Dorsolateral prefrontal cortex (tissue), 120 donors: ENCODE measurements at regions of chr10 and their contacts with region 1.

Region 1: DNA sequence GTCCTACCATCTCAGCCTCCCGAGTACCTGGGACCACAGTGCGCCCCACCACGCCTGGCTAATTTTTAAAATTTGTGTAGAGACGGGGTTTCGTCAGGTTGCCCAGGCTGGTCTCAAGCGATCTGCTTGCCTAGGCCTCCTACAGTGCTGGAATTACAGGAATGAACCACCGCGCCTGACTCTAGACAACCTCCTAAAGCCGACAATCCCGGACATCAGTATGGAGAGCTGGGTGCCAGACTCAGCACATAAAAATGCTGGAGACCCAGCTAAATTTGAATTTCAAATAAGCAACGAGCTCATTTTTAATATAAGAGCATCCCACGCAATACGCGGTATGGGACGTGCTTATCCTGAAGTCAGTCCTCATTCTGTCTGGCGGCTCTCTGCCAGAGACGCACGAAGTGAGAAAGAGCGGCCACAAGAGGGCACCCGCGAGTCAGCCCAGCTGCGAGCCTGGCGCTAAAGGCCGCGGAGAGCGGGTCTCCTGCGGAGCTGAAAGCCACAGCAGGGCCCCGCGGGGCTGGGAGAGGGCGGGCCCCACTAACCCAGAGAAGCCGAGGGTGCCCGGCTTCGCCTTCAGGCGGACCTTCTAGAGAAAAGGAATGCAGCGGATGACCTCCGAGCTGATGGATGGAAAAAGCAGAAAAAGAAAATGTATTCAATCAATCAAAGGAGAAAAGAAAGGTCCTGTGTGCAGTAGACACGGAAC is 7.0 kb downstream of the CALY start:
- DNase-seq: peak; percentile 82 to 92 (median 86)
- H3K4me3 ChIP-seq: peak overlapping the region in 56 of 59 donors; percentile 17 to 64 (median 43)
- H3K27ac ChIP-seq: peak overlapping the region in 9 of 59 donors; percentile 5 to 68 (median 27)
- H3K27me3 ChIP-seq: peaks cover 0 to 49% (median 23%) of the 10 kb centered on the region in 45 donors
- CTCF ChIP-seq: peak; percentile 84 to 99 (median 96)

Region 2: DNA sequence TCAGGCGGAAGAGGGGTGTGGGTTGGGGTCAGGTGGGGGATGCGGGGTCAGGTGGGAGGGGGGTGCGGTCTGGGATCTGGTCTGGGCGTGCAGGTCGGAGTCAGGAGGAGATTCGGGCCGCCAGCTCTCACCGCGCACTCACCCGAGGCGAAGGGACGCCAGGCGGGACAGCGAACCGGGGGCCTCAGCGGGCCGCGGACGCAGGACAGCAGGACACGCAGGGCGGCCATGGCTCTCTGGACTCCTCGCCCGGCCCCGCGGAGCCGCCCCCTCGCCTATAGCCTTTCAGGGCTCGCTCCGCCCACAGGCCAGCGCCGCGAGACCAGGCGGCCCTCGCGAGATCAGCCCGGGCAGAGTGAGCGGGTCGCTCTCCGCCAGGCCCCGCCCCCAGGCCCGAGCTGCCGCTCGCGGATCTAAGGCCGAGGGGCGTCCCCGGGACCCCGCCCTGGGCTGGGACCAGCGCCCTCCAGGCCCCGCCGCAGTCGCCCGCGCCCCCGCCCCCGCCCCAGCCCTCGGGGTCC is 43.5 kb after region 1 on chr10 and contains the start of gene ECHS1:
- intact Hi-C with region 1: loop called (anchors 5 kb)
- DNase-seq: peak; percentile 90 to 98 (median 94)
- H3K4me3 ChIP-seq: peak within 1 kb of the TSS; percentile 54 to 90 (median 76)
- H3K27ac ChIP-seq: peak within 1 kb of the TSS; percentile 76 to 99 (median 91)
- H3K27me3 ChIP-seq: no peaks in the 10 kb centered on the region
- CTCF ChIP-seq: peak in 10 of 56 donors; percentile 7 to 30 (median 19)
- total RNA-seq, gene ECHS1: 54.4 to 99.5 (median 79.6) TPM

Region 3: DNA sequence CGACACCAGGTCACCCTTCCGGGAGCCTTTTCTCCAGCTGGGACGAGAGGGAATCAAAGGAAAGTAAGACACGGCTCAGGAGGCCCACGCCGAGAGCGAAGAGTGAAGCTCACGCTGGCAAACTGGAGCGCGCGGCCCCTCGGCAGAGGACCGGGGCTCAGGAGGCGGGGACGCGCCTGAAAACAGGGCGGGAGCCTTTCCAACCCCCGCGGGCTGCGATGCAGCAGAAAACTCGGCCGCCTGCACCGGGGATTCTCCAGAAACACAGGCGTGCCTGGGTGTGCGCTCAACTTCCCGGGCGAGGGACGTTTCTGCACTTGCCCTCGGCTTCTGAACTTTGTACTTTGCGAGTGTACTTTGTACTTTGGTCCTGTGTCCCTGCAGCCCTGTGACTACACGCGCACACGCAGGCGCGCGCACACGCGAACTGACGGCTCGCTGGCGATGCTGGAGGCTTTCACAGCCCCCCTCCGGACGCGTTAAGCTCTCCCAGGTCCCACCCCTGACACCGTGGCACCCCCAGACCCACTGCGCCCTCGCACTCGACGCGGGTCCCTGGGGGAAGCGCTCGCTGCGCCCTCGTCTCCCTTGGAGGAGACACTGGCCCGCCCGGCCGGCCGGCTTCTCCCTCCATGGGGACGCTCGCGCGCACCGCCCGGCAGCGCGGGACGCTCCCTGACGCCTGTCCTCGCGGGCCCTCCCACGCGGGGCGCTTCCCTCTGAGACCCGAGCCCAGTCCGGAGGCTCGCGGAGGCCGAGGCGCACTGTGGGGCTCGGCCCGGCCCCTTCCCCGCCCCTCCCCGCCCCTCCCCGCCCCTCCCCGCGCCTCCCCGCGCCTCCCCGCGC is 48.8 kb after region 1 on chr10:
- intact Hi-C with region 1: loop called (anchors 5 kb)
- DNase-seq: peak; percentile 52 to 83 (median 70)
- H3K4me3 ChIP-seq: peak overlapping the region; percentile 46 to 99 (median 88)
- H3K27ac ChIP-seq: peak overlapping the region; percentile 23 to 99 (median 94)
- H3K27me3 ChIP-seq: no peaks in the 10 kb centered on the region
- CTCF ChIP-seq: peak in 2 of 56 donors; percentile 1 to 6

Region 4: GRCh38 chr10:133394064-133394663 is 64.5 kb after region 1 on chr10 and contains the start of gene MTG1:
- intact Hi-C with region 1: loop called in 1 of 2 experiments (anchors 2 kb)
- DNase-seq: peak; percentile 78 to 97 (median 91)
- H3K4me3 ChIP-seq: peak within 1 kb of the TSS; percentile 65 to 99 (median 93)
- H3K27ac ChIP-seq: peak within 1 kb of the TSS in 58 of 59 donors; percentile 33 to 93 (median 83)
- H3K27me3 ChIP-seq: no peaks in the 10 kb centered on the region
- CTCF ChIP-seq: peak in 54 of 56 donors; percentile 34 to 82 (median 58)
- total RNA-seq, gene MTG1: 33.3 to 78.1 (median 50.8) TPM